MCF 10A (cell line): ENCODE measurements at regions of chr1 and their contacts with region 1.

Region 1: DNA sequence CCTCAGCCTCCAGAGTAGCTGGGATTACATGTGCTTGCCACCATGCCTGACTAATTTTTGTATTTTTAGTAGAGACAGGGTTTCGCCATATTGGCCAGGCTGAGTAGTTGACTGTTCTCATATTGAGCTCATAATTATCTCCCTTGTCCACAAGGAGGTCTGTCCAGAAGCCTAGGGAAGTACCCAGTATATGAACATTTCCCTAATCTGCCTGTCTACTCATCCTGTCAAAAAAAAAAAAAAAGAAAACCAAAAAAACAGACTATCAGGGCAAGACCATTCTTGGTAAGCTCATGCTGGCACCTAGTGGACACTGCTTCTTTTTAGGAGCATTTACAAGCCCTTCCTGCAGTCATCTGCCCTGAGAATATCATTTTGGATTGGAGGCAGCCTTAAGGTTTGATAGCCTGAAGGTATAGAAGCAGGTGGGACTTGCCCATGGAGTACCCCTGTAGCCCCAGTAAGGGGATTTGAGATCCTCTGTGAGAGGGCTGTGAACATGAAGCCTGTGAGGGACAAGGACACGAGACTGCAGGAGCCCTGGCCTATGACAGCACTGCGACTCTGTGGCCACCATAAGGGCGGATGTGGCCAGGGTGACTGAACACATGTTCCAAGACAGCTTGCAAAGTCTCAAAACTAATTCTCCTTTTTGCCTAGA is 10.8 kb upstream of the DUSP12 start:
- DNase-seq: peak; percentile 87
- H3K4me3 Mint-ChIP-seq: no peak overlapping the region
- H3K27ac Mint-ChIP-seq: no peak overlapping the region
- H3K4me1 Mint-ChIP-seq: peaks cover 35% of the 10 kb centered on the region
- H3K27me3 Mint-ChIP-seq: no peaks in the 10 kb centered on the region
- CTCF ChIP-seq: peak; percentile 76

Region 2: DNA sequence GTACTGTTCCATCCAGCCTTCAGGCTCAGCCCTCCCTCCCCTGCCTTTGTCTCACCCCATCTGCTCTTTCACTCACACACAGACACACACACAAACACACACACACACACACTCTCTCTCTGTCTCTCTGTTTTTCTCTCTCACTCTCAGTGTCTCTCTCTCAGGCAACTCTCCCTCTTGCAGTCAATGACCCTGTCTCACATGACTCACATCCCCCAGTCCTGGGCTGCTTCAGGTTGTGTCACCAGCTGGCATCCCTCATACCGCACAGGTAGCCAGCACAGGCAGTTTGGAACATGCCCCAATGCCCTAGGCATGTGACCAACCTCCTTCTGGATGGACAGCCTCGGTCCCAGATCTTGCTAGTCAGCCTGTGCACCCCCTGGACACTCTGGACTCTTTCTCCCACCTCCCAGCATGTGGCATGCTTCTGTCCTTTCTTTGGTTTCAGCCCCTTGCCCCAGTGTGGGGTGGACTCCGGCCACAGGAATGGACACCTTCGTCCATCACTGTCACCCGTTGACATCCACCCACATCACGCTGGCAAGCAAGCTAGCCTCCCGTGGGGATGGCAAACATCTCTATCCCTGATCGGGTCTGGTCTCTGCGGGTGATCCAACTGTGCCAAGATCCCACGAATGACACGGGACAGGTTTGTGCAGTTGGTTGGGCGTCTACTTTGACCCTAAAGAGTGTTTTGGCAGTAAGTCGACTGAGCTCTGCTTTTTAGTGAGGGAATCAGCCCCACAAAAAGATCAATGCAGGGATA is 256.9 kb before region 1 on chr1:
- CTCF ChIA-PET with region 1: interaction called, 24 read pairs
- POLR2A ChIA-PET with region 1: interaction called, 5 read pairs
- intact Hi-C with region 1: loop called (anchors 1 kb)
- DNase-seq: peak; percentile 94
- H3K4me3 Mint-ChIP-seq: no peak overlapping the region
- H3K27ac Mint-ChIP-seq: no peak overlapping the region
- H3K4me1 Mint-ChIP-seq: no peaks in the 10 kb centered on the region
- H3K27me3 Mint-ChIP-seq: no peaks in the 10 kb centered on the region
- CTCF ChIP-seq: no peak

Region 3: GRCh38 chr1:161486806-161487741 is 251.7 kb before region 1 on chr1:
- CTCF ChIA-PET with region 1: interaction called, 24 read pairs
- POLR2A ChIA-PET with region 1: no interaction called
- intact Hi-C with region 1: loop called (anchors 1 kb)
- DNase-seq: peak; percentile 98
- H3K4me3 Mint-ChIP-seq: peak overlapping the region; percentile 41
- H3K27ac Mint-ChIP-seq: no peak overlapping the region
- H3K4me1 Mint-ChIP-seq: no peaks in the 10 kb centered on the region
- H3K27me3 Mint-ChIP-seq: peaks cover 39% of the 10 kb centered on the region
- CTCF ChIP-seq: peak; percentile 87

Region 4: DNA sequence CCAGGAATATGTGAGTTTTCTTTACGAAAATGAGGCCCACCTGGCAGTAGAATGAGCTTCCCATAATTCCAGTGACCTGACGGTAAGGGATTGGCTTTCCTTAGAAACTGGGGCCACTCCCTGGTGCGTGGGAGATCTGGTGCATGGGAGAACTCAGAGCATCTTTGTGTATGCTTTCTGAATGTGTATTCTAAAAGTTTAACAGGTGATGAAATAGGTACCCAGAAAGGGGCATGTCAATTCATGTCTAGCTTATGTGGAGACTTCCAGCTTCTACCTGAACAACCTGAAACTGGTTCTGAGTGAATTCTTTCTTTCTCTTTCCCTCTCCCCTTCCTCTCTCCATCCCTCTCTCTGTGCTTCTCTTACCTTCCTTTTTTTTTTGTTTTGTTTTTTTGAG is 46.9 kb before region 1 on chr1:
- CTCF ChIA-PET with region 1: interaction called, 4 read pairs
- POLR2A ChIA-PET with region 1: interaction called, 3 read pairs
- intact Hi-C with region 1: loop called (anchors 1 kb)
- DNase-seq: peak; percentile 38
- H3K4me3 Mint-ChIP-seq: no peak overlapping the region
- H3K27ac Mint-ChIP-seq: no peak overlapping the region
- H3K4me1 Mint-ChIP-seq: no peaks in the 10 kb centered on the region
- H3K27me3 Mint-ChIP-seq: peaks cover 47% of the 10 kb centered on the region
- CTCF ChIP-seq: no peak

Region 5: DNA sequence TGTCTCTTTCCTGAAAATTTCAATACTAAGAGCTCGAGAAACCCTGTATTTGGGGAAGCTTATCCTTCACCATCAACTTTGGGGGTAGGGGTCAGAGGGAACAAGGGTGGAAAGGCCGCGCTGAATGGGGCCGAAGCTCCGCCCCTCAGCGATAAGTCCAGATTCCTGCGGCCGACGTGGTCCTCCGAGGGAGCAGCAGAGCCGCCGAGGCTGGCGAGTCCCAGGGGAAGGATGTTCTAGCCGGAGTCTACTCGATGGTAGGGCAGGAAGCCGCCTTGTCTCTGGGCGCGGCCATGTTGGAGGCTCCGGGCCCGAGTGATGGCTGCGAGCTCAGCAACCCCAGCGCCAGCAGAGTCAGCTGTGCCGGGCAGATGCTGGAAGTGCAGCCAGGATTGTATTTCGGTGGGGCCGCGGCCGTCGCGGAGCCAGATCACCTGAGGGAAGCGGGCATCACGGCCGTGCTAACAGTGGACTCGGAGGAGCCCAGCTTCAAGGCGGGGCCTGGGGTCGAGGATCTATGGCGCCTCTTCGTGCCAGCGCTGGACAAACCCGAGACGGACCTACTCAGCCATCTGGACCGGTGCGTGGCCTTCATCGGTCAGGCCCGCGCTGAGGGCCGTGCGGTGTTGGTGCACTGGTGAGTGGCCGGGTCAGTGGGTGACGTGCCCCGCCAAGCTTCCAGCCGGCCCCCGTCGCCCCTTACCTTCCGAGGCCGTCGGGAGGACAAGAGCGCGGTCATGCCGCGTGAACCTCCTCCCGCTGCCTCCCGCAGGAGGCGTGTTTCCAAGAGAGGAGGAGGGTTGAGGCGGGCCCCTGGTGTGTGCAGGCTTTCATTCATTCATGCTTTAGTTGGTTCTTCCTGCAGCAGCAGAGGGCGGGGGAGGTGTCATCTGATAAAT is 11.0 kb after region 1 on chr1 and contains the start of gene DUSP12:
- CTCF ChIA-PET with region 1: interaction called, 31 read pairs
- POLR2A ChIA-PET with region 1: interaction called, 59 read pairs
- intact Hi-C with region 1: no loop called
- DNase-seq: peak; percentile 98
- H3K4me3 Mint-ChIP-seq: peak within 1 kb of the TSS; percentile 92
- H3K27ac Mint-ChIP-seq: peak within 1 kb of the TSS; percentile 95
- H3K4me1 Mint-ChIP-seq: peaks cover 29% of the 10 kb centered on the region
- H3K27me3 Mint-ChIP-seq: no peaks in the 10 kb centered on the region
- CTCF ChIP-seq: no peak
- total RNA-seq, gene DUSP12: 57.0 and 65.0 TPM in 2 replicates

Region 6: GRCh38 chr1:162040681-162041080 is 301.9 kb after region 1 on chr1:
- CTCF ChIA-PET with region 1: interaction called, 11 read pairs
- POLR2A ChIA-PET with region 1: no interaction called
- intact Hi-C with region 1: loop called (anchors 5 kb)
- DNase-seq: peak; percentile 67
- H3K4me3 Mint-ChIP-seq: no peak overlapping the region
- H3K27ac Mint-ChIP-seq: no peak overlapping the region
- H3K4me1 Mint-ChIP-seq: peaks cover 6% of the 10 kb centered on the region
- H3K27me3 Mint-ChIP-seq: no peaks in the 10 kb centered on the region
- CTCF ChIP-seq: peak; percentile 23